HepG2 (cell line): ENCODE measurements at regions of chr5 and their contacts with region 1.

Region 1: DNA sequence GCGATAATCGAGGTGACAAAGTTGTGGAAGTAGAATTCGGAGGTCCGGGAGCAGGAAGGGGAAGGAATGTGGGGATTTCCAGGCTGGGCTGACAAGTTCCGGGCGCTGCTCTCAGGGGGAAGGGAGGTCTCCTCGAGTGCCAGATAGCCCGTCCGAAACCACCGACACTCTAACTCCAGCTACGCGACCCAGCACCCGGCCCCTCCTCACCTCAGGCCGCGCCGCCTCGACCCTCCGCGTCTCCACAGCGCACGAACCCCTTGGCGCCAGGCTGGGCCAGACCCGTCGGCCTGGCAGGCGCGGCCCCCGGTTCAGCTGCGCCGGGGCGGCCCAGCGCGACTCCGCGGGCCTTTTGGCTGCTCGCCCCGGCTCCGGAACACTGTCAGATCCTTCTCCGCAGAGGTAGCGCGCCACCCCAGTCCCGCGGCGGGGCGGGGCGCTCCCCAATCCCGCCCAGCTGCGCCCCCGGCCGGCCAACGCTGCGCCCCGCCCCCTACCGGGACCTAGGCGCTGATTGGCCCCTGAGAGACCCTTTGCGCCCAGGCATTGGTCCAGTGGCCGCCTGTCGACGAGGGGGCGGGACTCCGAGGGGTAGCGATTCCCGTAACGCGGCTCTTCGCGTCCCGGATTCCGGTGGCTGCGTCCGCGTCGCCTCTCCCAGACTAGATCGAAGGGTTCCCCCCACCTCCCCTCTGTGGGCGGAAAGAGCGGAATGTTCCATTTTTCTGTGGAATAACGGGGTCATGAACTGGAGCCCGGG is at the start of gene IL6ST:
- DNase-seq: peak; percentile 96
- ATAC-seq: peak; percentile 96
- H3K4me3 ChIP-seq: peak within 1 kb of the TSS; percentile 90 to 99 (median 97)
- H3K27ac ChIP-seq: peak within 1 kb of the TSS; percentile 94
- H3K4me1 ChIP-seq: peaks cover 48% of the 10 kb centered on the region
- H3K27me3 ChIP-seq: peaks cover 0 to 4% of the 10 kb centered on the region in 2 experiments; a peak in 1 of 5 replicates
- CTCF ChIP-seq: peak; percentile 47
- EP300 ChIP-seq: peak in 1 of 2 experiments; percentile 49; a peak in 2 of 4 replicates
- POLR2A ChIP-seq: peak; percentile 60 to 87
- RAD21 ChIP-seq: peak; percentile 68
- total RNA-seq, gene IL6ST: 161 and 166 TPM in 2 replicates

Region 2: DNA sequence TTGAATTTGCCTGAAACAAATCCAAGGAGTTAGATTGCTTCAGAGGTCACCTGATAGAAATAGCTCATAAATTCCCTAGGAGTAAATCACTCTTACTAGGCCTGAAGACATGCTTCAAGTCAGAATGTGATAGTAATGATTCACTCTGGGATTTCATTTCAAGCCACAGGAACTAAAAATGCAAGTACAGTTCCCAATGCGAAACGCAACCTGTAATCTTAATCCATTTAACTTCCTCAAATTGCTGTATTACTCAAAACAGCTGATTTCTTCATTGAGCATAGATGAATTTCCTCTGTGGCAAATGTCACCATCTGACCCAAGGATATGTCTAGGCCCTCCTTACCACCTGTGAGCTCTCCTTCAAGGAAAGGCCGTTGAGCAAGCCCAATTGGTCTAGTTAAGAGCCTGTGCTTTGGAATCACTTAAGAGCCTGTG is 32.1 kb after region 1 on chr5:
- CTCF ChIA-PET with region 1: no interaction called
- POLR2A ChIA-PET with region 1: interaction called, 12 read pairs
- in situ Hi-C with region 1: no loop called
- intact Hi-C with region 1: loop called (anchors 5 kb)
- DNase-seq: no peak
- ATAC-seq: no peak
- H3K4me3 ChIP-seq: no peak overlapping the region
- H3K27ac ChIP-seq: peak overlapping the region; percentile 47
- H3K4me1 ChIP-seq: peaks cover 63% of the 10 kb centered on the region
- H3K27me3 ChIP-seq: no peaks in the 10 kb centered on the region
- CTCF ChIP-seq: no peak
- EP300 ChIP-seq: no peak
- POLR2A ChIP-seq: no peak
- RAD21 ChIP-seq: no peak

Region 3: GRCh38 chr5:56056875-56057274 is 62.1 kb after region 1 on chr5:
- CTCF ChIA-PET with region 1: no interaction called
- POLR2A ChIA-PET with region 1: interaction called, 10 read pairs
- in situ Hi-C with region 1: no loop called
- intact Hi-C with region 1: loop called (anchors 2 kb)
- DNase-seq: no peak
- ATAC-seq: no peak
- H3K4me3 ChIP-seq: no peak overlapping the region
- H3K27ac ChIP-seq: no peak overlapping the region
- H3K4me1 ChIP-seq: peaks cover 84% of the 10 kb centered on the region
- H3K27me3 ChIP-seq: no peaks in the 10 kb centered on the region
- CTCF ChIP-seq: no peak
- EP300 ChIP-seq: no peak
- POLR2A ChIP-seq: no peak
- RAD21 ChIP-seq: no peak

Region 4: DNA sequence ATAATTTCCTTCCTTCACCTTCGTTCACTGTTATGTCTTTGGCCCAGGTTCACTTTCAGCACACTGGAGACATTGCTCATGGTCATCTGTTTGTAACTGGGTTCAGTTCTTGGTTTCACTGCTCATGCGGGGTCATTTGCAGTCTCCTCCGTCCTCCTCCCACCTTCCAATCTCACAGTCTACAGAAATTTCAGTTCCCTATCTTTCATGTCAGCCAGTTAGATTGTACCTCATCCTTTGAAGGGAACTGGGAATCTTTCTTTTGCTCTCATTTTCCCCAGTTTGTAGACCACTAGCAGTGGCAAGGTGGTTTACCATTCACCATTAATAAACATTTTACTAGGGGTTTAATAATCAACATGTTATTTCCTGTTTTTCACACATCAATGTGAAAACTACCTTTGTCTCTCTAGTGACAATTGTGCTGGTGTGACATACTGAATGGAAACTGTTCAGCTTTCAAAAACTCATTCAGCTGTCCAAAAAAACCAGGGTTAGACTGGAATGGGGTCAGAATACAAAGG is 100.9 kb after region 1 on chr5:
- CTCF ChIA-PET with region 1: no interaction called
- POLR2A ChIA-PET with region 1: interaction called, 4 read pairs
- in situ Hi-C with region 1: no loop called
- intact Hi-C with region 1: loop called (anchors 5 kb)
- DNase-seq: no peak
- ATAC-seq: no peak
- H3K4me3 ChIP-seq: no peak overlapping the region
- H3K27ac ChIP-seq: no peak overlapping the region
- H3K4me1 ChIP-seq: peaks cover 65% of the 10 kb centered on the region
- H3K27me3 ChIP-seq: no peaks in the 10 kb centered on the region
- CTCF ChIP-seq: no peak
- EP300 ChIP-seq: no peak
- POLR2A ChIP-seq: no peak
- RAD21 ChIP-seq: no peak

Region 5: DNA sequence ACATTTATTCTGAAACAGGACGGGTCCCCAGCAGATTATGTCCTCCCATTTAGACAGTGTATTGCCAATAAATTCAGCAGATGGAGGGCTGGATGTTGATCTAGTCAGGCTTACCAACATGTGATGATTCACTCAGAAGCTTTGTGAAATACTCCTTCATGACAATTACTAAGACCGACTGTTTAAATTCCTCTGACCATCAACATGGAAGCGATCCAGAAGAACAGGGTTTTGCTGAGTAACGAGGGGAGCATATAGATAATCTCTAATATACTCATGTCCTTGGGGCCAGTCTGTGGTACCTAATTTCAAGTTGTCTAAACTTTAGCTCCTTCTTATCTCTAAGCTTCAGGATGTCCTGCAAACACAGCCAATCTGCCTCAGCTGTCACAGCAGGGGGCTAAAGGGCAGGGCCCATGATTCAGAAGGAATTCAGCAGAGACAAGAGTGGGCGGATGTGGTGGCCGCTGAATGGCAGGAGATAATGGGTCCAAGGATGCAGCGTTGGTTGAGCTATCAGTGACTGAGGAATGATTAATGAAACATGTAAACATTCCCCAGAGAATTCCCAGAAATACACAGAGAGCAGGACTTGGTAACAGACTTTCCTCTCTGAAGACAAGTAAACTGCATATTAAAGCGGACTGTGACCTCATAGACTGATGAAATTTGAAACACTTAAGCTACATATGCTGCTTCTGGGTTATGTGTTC is 128.9 kb after region 1 on chr5:
- CTCF ChIA-PET with region 1: no interaction called
- POLR2A ChIA-PET with region 1: interaction called, 10 read pairs
- in situ Hi-C with region 1: no loop called
- intact Hi-C with region 1: loop called (anchors 2 kb)
- DNase-seq: peak; percentile 99
- ATAC-seq: peak; percentile 98
- H3K4me3 ChIP-seq: peak overlapping the region; percentile 6 to 45 (median 29); a peak in 2 of 6 replicates
- H3K27ac ChIP-seq: peak overlapping the region; percentile 86
- H3K4me1 ChIP-seq: peaks cover 73% of the 10 kb centered on the region
- H3K27me3 ChIP-seq: no peaks in the 10 kb centered on the region
- CTCF ChIP-seq: 0 out of 2 replicates have a peak, but pooled peaks have one; percentile 6
- EP300 ChIP-seq: peak in 1 of 2 experiments; percentile 91; a peak in 2 of 4 replicates
- POLR2A ChIP-seq: peak in 1 of 2 experiments; percentile 43; a peak in 1 of 4 replicates
- RAD21 ChIP-seq: no peak

Region 6: GRCh38 chr5:56852228-56853000 is 857.7 kb after region 1 on chr5:
- CTCF ChIA-PET with region 1: no interaction called
- POLR2A ChIA-PET with region 1: no interaction called
- in situ Hi-C with region 1: loop called (anchors 25 kb)
- intact Hi-C with region 1: no loop called
- DNase-seq: no peak
- ATAC-seq: no peak
- H3K4me3 ChIP-seq: no peak overlapping the region
- H3K27ac ChIP-seq: no peak overlapping the region
- H3K4me1 ChIP-seq: peaks cover 42% of the 10 kb centered on the region
- H3K27me3 ChIP-seq: no peaks in the 10 kb centered on the region
- CTCF ChIP-seq: no peak
- EP300 ChIP-seq: no peak
- POLR2A ChIP-seq: no peak
- RAD21 ChIP-seq: no peak